Activated naive CD8-positive, alpha-beta T cell treated with anti-CD3 and anti-CD28 coated beads, Interleukin-2, amount 10 ng/mL, durations not matched to agents 7 days and 5 days (primary cell): ENCODE measurements at regions of chr2 and their contacts with region 1.

Region 1: DNA sequence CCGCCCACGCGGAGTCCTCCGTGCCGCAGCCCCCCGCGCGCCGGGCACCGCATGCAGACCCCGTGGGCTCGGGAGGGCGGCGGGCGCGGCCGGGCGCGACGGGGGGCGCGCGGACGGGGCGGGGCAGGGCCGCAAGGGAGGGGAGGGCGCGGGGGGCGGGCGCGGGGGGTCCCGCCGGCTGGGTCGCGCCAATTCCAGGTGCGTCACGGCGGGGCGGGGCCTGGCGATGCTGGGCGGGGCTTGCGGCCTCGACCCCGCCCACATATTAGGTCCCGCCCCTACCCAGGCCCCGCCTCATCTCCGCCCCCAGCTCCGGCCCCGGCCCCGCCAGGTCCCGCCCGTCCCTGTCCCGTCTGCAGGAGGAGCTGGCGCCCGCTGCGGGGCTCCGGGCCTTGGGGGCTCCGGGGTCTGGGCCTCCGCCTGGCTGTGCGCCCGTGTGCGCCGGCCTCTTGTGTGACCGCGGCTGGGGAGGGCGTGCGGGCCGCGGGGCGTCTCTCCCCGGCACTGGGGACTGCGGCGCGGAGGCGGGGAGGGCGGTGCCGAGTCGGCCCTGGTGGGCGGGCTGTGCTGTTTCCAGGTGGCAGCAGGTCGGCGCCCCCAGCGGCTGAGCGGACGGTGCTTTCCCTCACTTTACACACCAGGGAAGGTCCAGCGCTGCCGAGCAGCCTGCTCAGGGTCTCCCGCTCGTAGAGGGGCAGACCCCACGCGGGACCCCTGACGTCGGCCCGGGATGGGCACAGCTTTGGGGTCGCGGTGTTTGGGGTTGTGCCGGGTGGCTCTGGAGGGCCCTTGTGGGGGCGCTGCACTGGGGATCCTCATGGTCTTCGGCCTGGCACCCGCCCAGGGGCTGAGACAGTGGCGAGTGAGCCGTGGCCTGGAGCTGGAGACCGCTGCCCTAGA is 543 bp downstream of the ING5 start:
- DNase-seq: peak; percentile 94
- ATAC-seq: peak; percentile 74
- H3K4me3 Mint-ChIP-seq: peak overlapping the region; percentile 86
- H3K27ac Mint-ChIP-seq: peak overlapping the region; percentile 79
- H3K4me1 Mint-ChIP-seq: peaks cover 15% of the 10 kb centered on the region
- H3K27me3 Mint-ChIP-seq: no peaks in the 10 kb centered on the region

Region 2: DNA sequence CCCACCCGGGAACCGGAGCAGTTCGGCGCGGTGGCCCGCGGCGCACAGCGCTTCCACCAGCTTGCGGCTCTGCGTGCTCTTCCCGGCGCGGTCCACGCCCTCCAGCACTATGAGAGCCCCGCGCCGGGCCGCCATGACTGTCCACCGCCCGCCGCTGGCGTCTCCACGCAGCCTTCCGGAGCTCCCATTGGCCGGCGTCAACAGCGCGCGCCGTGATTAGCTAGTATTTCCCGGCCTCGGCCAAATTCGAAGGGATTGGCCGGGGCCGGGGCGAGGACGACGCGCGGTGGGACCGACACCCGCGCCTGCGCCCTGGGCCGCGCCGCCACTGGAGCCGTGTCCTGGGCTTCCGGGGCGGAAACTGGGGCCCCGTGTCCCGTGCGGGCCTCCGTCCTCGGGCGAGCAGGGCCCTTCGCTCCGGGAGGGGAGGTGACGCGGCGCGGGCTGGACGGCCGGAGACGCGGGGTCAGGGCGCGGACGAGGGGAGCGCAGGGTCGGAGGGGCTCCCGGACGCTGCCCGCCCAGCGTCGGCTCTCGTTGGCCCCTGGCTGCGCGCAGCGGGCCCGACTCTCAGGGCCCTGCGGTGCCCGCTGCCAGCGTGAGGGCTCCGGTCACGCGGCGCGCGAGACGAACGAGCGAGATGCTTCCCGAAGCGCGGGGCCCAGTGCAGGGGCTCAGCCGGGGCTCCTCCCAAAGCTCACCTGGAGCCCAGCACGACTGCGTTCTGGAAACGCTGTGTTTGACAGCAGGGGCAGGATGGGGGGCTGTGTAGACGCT is 15.5 kb before region 1 on chr2 and contains the start of gene DTYMK:
- POLR2A ChIA-PET with region 1: interaction called, 62 read pairs
- DNase-seq: peak; percentile 99
- ATAC-seq: peak; percentile 97
- H3K4me3 Mint-ChIP-seq: peak within 1 kb of the TSS; percentile 89
- H3K27ac Mint-ChIP-seq: peak within 1 kb of the TSS; percentile 96
- H3K4me1 Mint-ChIP-seq: peaks cover 22% of the 10 kb centered on the region
- H3K27me3 Mint-ChIP-seq: no peaks in the 10 kb centered on the region
- total RNA-seq, gene DTYMK: 56.5 to 67.9 TPM

Region 3: DNA sequence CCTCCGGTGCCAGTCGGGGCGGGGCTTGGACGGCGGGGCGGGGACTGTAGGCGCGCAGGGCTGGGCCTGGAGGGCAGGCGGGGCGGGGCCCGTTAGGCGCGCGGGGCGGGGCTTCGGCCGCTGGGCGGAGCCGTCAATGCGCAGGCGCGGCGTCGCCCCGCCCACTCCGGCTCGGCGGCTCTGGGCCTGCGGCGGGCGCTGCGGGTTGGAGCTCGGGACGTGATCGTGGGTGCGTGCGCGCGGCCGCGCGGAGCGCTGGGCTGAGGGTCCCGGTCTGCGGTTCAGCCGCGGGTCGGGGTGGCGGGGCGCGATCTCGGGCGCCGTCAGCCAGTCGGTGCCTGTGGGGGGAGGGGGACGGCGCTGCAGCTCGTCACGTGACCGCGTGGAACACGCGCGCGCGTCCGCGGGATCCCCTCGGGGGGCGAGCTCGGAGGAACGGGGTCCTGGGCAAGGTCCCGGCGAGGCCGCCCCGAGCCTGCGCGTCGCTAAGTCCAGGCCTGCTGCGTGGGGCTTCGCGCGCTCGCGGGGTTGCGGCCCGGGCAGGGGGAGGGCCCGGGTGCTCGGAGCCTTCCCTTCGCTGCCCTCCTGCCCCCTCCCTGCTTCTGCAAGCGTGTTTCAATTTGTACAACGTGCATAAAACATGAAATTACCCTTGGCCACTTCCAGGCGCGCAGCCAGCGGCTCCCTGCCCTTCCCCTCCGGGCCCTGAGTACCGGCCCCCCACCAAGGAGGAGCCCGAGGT is 32.3 kb after region 1 on chr2 and contains the start of gene D2HGDH:
- POLR2A ChIA-PET with region 1: interaction called, 24 read pairs
- DNase-seq: peak; percentile 99
- ATAC-seq: peak; percentile 90
- H3K4me3 Mint-ChIP-seq: peak within 1 kb of the TSS; percentile 81
- H3K27ac Mint-ChIP-seq: peak within 1 kb of the TSS; percentile 75
- H3K4me1 Mint-ChIP-seq: peaks cover 30% of the 10 kb centered on the region
- H3K27me3 Mint-ChIP-seq: no peaks in the 10 kb centered on the region
- total RNA-seq, gene D2HGDH: 44.2 to 46.2 TPM